Caco-2 (cell line): ENCODE measurements at regions of chr11 and their contacts with region 1.

Region 1: DNA sequence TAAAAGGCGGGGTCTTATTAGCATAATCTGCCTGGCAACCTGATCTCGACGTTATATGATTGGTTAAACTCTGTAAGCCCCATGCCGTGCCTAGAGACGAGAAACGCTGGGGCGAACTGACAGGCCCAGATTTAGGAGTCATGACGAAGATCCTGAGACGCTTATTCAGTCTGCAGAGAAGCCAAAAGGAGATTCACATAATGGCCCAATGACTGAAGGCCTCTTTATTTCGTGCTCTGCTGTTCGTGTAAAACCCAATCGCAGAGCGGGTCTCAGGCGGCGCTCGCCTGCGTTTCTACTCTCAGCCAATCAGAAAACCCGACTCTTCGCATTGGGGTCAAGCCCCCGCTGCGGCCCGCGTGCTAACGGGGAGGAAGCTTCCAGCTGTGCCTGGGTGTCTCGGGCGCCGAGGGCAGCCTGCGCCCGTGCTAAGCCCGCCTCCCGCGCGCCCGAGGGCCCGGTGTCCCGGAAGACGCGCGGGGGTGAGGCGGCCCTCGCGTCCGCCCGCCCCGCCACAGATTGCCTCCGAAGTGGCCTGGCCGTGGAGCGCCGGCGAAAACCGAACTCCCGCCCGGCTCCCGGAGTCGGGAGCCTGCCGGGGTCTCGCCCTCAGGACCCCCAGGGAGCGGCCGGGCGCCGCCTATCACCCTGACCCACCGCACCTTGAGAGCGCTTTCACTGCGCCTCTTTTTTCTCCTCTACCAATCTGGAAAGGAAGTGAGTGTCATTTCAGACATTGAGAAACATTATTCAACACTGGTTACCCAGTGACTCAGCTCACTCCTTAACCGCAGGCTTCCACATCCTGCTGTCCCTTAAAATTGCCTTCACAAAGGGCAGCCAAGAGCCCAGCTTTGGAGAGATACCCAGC is 446 bp upstream of the PRDM10 start:
- DNase-seq: peak; percentile 99
- H3K4me3 ChIP-seq: peak overlapping the region; percentile 60
- H3K4me3 Mint-ChIP-seq: peak overlapping the region; percentile 97
- H3K27ac Mint-ChIP-seq: peak overlapping the region; percentile 100
- H3K4me1 ChIP-seq: peaks cover 43% of the 10 kb centered on the region
- H3K4me1 Mint-ChIP-seq: peaks cover 35% of the 10 kb centered on the region
- H3K27me3 ChIP-seq: no peaks in the 10 kb centered on the region
- H3K27me3 Mint-ChIP-seq: no peaks in the 10 kb centered on the region
- CTCF ChIP-seq: no peak

Region 2: GRCh38 chr11:129779342-129779741 is 223.7 kb before region 1 on chr11:
- CTCF ChIA-PET with region 1: no interaction called
- POLR2A ChIA-PET with region 1: interaction called, 16 read pairs
- intact Hi-C with region 1: no loop called
- DNase-seq: peak; percentile 76 to 79
- H3K4me3 ChIP-seq: peak overlapping the region; percentile 11; the same call in 1 of the 2 replicates
- H3K4me3 Mint-ChIP-seq: peak overlapping the region; percentile 71
- H3K27ac Mint-ChIP-seq: peak overlapping the region; percentile 90
- H3K4me1 ChIP-seq: peaks cover 33% of the 10 kb centered on the region
- H3K4me1 Mint-ChIP-seq: peaks cover 30% of the 10 kb centered on the region
- H3K27me3 ChIP-seq: no peaks in the 10 kb centered on the region
- H3K27me3 Mint-ChIP-seq: no peaks in the 10 kb centered on the region
- CTCF ChIP-seq: no peak

Region 3: GRCh38 chr11:129871914-129872313 is 131.2 kb before region 1 on chr11:
- CTCF ChIA-PET with region 1: no interaction called
- POLR2A ChIA-PET with region 1: no interaction called
- intact Hi-C with region 1: no loop called
- DNase-seq: no peak
- H3K4me3 ChIP-seq: no peak overlapping the region
- H3K4me3 Mint-ChIP-seq: no peak overlapping the region
- H3K27ac Mint-ChIP-seq: no peak overlapping the region
- H3K4me1 ChIP-seq: peaks cover 6% of the 10 kb centered on the region
- H3K4me1 Mint-ChIP-seq: peaks cover 1% of the 10 kb centered on the region
- H3K27me3 ChIP-seq: no peaks in the 10 kb centered on the region
- H3K27me3 Mint-ChIP-seq: no peaks in the 10 kb centered on the region
- CTCF ChIP-seq: no peak

Region 4: DNA sequence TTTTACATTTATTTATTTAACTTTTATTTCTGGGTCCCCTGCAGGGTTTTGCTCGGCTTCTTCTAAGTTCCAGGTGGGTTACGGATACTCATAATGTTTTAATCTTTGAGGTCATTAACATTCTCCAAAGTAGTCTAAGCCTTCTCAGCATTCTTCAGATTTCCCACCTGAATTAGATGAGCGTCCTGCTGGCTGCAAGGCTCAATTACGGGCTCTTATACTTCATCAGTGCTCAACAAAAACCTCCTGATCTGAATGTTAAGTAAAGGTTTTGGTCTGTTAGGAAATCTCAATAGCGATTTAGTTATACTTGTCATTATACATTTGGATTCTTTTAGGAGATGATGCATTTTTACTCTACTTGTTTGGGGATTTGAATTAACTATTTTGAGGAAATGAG is 80.4 kb before region 1 on chr11:
- CTCF ChIA-PET with region 1: interaction called, 7 read pairs
- POLR2A ChIA-PET with region 1: interaction called, 11 read pairs
- intact Hi-C with region 1: loop called (anchors 1 kb)
- DNase-seq: peak in 1 of 2 experiments; percentile 29
- H3K4me3 ChIP-seq: no peak overlapping the region
- H3K4me3 Mint-ChIP-seq: no peak overlapping the region
- H3K27ac Mint-ChIP-seq: no peak overlapping the region
- H3K4me1 ChIP-seq: peaks cover 5% of the 10 kb centered on the region
- H3K4me1 Mint-ChIP-seq: peaks cover 6% of the 10 kb centered on the region
- H3K27me3 ChIP-seq: no peaks in the 10 kb centered on the region
- H3K27me3 Mint-ChIP-seq: no peaks in the 10 kb centered on the region
- CTCF ChIP-seq: peak in 1 of 2 experiments; percentile 35

Region 5: DNA sequence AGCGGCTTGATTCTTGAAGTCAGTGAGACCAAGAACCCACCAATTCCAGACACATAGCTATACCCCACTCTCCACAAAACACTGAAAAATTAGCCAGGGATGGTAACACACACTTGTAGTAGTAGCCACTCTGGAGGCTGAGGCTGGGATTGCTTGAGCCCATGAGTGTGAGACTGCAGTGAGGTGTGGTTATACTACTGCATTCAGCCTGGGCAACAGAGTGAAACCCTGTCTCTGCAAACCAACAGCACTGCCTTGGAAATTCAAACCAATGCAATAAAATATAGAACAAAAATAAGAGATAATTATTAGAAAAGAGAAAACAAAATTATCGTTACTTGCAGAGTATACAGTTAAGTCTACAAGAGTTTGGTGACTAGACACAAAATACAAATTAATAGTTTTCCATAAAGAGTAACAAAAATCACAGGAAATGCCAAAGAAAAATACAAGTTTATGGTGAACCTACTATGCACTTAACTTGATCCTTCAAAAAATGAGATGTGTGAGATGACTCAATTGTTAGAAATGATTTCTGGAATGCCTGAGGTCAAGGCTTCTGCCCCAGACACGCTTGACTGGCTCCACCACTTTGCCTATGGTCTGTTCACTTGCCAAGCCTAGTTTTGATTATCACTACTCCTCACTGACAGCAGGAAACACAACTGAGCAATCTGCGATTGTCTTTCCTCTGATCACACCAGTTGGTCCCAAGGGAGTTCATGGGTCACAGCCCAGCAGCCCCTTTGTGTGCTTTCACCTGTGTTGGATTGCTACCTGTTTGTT is 19.9 kb after region 1 on chr11:
- CTCF ChIA-PET with region 1: interaction called, 13 read pairs
- POLR2A ChIA-PET with region 1: interaction called, 27 read pairs
- intact Hi-C with region 1: loop called (anchors 1 kb)
- DNase-seq: peak; percentile 88 to 89
- H3K4me3 ChIP-seq: no peak overlapping the region
- H3K4me3 Mint-ChIP-seq: peak overlapping the region; percentile 24
- H3K27ac Mint-ChIP-seq: peak overlapping the region; percentile 71
- H3K4me1 ChIP-seq: peaks cover 59% of the 10 kb centered on the region
- H3K4me1 Mint-ChIP-seq: peaks cover 47% of the 10 kb centered on the region
- H3K27me3 ChIP-seq: no peaks in the 10 kb centered on the region
- H3K27me3 Mint-ChIP-seq: no peaks in the 10 kb centered on the region
- CTCF ChIP-seq: no peak

Region 6: DNA sequence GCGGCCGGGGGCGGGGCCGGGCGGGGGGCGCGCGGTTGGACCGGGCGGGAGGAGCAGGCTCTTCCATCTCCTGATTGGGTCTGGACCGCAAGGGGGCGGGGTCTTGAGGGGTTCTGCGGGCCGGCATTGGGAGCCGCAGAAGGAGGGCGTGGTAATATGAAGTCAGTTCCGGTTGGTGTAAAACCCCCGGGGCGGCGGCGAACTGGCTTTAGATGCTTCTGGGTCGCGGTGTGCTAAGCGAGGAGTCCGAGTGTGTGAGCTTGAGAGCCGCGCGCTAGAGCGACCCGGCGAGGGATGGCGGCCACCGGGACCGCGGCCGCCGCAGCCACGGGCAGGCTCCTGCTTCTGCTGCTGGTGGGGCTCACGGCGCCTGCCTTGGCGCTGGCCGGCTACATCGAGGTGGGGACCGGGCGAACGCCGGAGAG is 66.6 kb after region 1 on chr11 and contains the start of gene APLP2:
- CTCF ChIA-PET with region 1: interaction called, 18 read pairs
- POLR2A ChIA-PET with region 1: interaction called, 97 read pairs
- intact Hi-C with region 1: loop called (anchors 1 kb)
- DNase-seq: peak; percentile 100
- H3K4me3 ChIP-seq: peak within 1 kb of the TSS; percentile 99
- H3K4me3 Mint-ChIP-seq: peak within 1 kb of the TSS; percentile 90
- H3K27ac Mint-ChIP-seq: peak within 1 kb of the TSS; percentile 91
- H3K4me1 ChIP-seq: peaks cover 41% of the 10 kb centered on the region
- H3K4me1 Mint-ChIP-seq: peaks cover 27% of the 10 kb centered on the region
- H3K27me3 ChIP-seq: no peaks in the 10 kb centered on the region
- H3K27me3 Mint-ChIP-seq: no peaks in the 10 kb centered on the region
- CTCF ChIP-seq: no peak
- total RNA-seq, gene APLP2: 1,761 and 2,076 TPM in 2 replicates

Region 7: GRCh38 chr11:130145975-130146776 is 143.1 kb after region 1 on chr11:
- CTCF ChIA-PET with region 1: interaction called, 8 read pairs
- POLR2A ChIA-PET with region 1: interaction called, 22 read pairs
- intact Hi-C with region 1: loop called (anchors 1 kb)
- DNase-seq: peak; percentile 98
- H3K4me3 ChIP-seq: no peak overlapping the region
- H3K4me3 Mint-ChIP-seq: peak overlapping the region; percentile 30
- H3K27ac Mint-ChIP-seq: peak overlapping the region; percentile 87
- H3K4me1 ChIP-seq: peaks cover 59% of the 10 kb centered on the region
- H3K4me1 Mint-ChIP-seq: peaks cover 69% of the 10 kb centered on the region
- H3K27me3 ChIP-seq: no peaks in the 10 kb centered on the region
- H3K27me3 Mint-ChIP-seq: no peaks in the 10 kb centered on the region
- CTCF ChIP-seq: peak; percentile 66 to 94

Region 8: GRCh38 chr11:130209128-130209932 is 206.2 kb after region 1 on chr11:
- CTCF ChIA-PET with region 1: no interaction called
- POLR2A ChIA-PET with region 1: no interaction called
- intact Hi-C with region 1: no loop called
- DNase-seq: peak in 1 of 2 experiments; percentile 39
- H3K4me3 ChIP-seq: no peak overlapping the region
- H3K4me3 Mint-ChIP-seq: no peak overlapping the region
- H3K27ac Mint-ChIP-seq: no peak overlapping the region
- H3K4me1 ChIP-seq: 0 out of 2 replicates have a peak, but pooled peaks cover 5% of the 10 kb centered on the region
- H3K4me1 Mint-ChIP-seq: no peaks in the 10 kb centered on the region
- H3K27me3 ChIP-seq: no peaks in the 10 kb centered on the region
- H3K27me3 Mint-ChIP-seq: no peaks in the 10 kb centered on the region
- CTCF ChIP-seq: no peak